HEK293T (cell line): ENCODE measurements at regions of chr12 and their contacts with region 1.

Region 1: GRCh38 chr12:62983599-62984022 is 48.7 kb upstream of the PPM1H start:
- DNase-seq: no peak

Region 2: DNA sequence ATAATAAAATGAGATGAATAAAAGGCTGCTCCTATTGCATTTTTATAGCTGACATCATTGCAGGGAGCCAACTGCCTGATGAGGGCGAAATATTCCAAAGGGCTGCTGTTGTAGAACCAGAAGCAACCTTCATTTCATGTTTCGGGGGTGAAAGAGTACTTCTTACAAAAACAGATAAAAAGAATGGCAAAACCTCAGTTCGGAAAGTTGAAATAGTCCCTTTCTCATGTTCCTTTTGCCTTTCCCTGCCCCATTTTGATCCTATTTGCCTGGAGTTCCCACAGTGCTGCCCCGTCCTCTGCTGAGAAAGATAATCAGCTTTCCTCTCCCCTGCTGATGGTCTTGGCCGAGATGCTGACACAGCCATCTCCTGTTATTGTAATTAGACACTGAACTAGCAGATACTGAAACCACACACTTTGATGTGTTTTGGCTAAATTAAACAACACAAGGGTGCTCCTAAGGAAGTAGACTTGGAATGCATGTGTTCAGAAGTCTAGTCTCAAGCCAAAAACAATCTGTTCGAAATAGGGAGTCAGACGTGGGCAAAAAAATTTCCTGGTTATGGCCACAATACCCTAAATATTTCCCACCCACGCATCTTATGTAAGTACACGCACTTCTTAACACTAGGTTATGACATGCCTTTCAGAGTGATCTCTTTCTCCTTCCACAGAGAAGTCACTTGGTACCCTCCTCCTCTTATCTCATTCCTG is 165.9 kb before region 1 on chr12:
- CTCF ChIA-PET with region 1: interaction called, 10 read pairs
- POLR2A ChIA-PET with region 1: no interaction called
- DNase-seq: peak; percentile 38